Posterior vena cava (tissue), 2 donors: ENCODE measurements at regions of chr15 and their contacts with region 1.

Region 1: DNA sequence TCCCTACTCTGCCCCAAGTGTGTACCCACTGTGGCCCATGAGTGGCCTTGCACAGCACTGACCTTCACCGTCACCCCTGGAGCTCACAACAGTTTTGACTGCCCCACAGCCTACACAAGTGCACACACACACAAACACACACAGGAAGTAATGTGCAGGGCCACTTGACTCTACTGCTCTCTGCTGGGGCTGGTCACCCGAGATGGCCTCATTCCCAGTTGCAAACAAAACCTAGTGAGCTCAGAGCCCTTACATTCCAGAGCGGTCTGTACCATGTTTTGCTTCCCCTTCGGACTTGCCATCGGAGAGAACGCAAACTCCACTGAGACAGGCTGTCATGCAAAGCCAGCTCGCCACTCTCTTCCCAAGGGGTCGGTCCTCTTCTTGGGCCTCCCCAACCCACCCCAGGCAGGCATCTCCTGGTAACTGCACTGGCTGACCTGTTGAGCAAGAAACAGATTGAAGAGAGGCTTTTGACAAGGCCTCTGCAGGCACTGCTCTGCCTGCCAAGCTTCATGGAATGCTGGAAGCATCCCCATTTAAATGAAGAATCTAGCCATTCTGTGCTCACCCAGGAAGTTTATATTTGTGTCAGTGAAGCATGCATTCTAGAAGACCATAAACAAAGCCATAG is 232.0 kb upstream of the IGF1R start:
- DNase-seq: no peak

Region 2: GRCh38 chr15:98350276-98350675 is 66.1 kb before region 1 on chr15:
- intact Hi-C with region 1: loop called in 1 of 2 experiments (anchors 2 kb)
- DNase-seq: no peak

Region 3: DNA sequence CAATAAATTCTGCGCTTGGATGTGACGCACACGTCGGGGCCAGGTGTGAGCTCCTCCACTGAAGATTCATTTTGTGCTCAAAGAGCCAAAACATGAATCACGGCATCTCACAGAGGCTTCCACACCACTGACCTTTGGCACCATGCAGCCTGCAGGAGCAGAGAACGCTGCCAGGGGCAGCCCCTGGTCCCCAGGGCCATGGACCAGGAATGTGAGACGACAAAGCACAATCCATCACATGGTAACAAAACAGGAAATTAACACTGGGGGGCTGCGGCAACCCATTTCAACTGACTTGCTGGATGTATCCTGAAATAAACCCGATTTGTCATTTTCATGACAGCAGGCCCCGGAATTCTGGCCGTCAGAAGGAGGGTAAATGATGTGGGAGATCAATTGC is 64.5 kb after region 1 on chr15:
- intact Hi-C with region 1: no loop called
- DNase-seq: no peak